Ovary (tissue), 10 donors: ENCODE measurements at regions of chr7 and their contacts with region 1.

Region 1: GRCh38 chr7:8714791-8715190 is 281.4 kb downstream of the NXPH1 start:
- DNase-seq: no peak
- H3K4me3 ChIP-seq: no peak overlapping the region
- H3K27ac ChIP-seq: no peak overlapping the region
- H3K4me1 ChIP-seq: no peaks in the 10 kb centered on the region
- H3K27me3 ChIP-seq: no peaks in the 10 kb centered on the region
- CTCF ChIP-seq: no peak
- EP300 ChIP-seq: no peak
- POLR2A ChIP-seq: no peak

Region 2: DNA sequence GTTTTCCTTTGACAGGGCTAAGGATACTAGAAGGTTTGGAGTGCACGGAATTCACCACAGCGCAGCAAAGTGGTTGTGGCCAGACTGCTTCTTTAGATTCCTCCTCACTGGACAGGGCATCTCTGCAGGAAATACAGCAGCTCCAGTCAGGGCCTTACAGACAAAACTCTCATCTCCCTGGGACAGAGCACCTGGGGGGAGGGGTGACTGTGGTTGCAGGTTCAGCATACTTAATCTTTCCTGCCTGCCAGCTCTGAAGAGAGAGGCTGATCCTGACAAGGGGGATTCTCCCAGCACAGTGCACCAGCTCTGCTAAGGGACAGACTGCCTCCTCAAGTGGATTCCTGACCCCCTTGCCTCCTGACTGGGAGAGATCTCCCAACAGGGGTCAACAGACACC is 976.5 kb after region 1 on chr7:
- intact Hi-C with region 1: loop called in 1 of 4 experiments (anchors 5 kb)
- DNase-seq: no peak
- H3K4me3 ChIP-seq: no peak overlapping the region
- H3K27ac ChIP-seq: no peak overlapping the region
- H3K4me1 ChIP-seq: no peaks in the 10 kb centered on the region
- H3K27me3 ChIP-seq: no peaks in the 10 kb centered on the region
- CTCF ChIP-seq: no peak
- EP300 ChIP-seq: no peak
- POLR2A ChIP-seq: no peak

Region 3: GRCh38 chr7:10315881-10316280 is 1601.1 kb after region 1 on chr7:
- intact Hi-C with region 1: no loop called
- DNase-seq: no peak
- H3K4me3 ChIP-seq: no peak overlapping the region
- H3K27ac ChIP-seq: no peak overlapping the region
- H3K4me1 ChIP-seq: no peaks in the 10 kb centered on the region
- H3K27me3 ChIP-seq: no peaks in the 10 kb centered on the region
- CTCF ChIP-seq: no peak
- EP300 ChIP-seq: no peak
- POLR2A ChIP-seq: no peak